ENCODE measurements at regions of chr5 and their contacts with region 1.

Region 1: GRCh38 chr5:164498438-164498837 is 993.0 kb downstream of the MAT2B start:
- DNase-seq: no peak
- ATAC-seq: no peak

Region 2: GRCh38 chr5:163564321-163564938 is 934.0 kb before region 1 on chr5:
- intact Hi-C with region 1: loop called in 1 of 2 experiments (anchors 5 kb)
- DNase-seq: peak; percentile 29
- ATAC-seq: peak in 1 of 2 donors; percentile 50